Naive thymus-derived CD4-positive, alpha-beta T cell (primary cell): ENCODE measurements at regions of chr3 and their contacts with region 1.

Region 1: DNA sequence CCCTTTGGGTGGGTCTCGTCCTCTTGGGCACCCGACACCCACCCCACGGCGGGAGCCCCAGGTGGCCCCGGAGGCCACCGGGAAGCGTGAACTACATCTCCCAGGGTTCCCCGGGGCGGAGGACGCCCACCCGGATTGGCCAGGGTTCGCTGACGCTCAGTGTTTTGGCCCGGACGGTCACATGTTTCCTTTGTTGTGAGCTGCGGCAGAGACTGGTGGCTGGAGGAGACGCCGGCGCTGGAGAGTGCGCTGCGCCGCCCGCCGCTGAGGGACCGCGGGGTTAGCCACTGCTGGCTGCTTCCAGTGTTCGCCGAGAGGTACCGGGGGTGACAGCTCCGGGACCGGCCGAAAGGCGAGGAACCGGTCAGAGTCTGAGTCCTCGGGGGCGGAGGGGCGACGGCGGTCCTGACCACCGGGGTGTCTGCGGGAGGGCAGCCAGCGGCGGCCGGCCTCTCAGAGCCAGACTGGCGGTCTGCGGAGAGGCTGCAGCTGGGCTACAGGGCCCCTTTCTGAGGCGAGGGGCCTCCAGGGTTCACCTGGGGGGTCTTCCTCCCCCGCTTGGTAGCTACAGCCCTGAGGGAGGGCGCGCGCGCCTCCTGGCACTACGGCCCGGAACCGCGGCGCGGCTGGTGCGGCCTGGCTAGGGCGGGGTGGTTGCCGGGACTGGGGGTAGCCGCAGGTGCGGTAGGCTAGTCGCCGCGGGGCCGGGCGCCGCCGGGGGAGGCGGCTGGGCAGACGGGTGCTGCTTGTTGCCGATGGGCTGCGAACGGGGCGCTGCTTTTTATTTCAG is at the start of gene KLHL24:
- DNase-seq: peak; percentile 75 to 90 (median 88)
- ATAC-seq: peak; percentile 83
- H3K4me3 ChIP-seq: peak within 1 kb of the TSS; percentile 75
- H3K4me3 Mint-ChIP-seq: peak within 1 kb of the TSS; percentile 92 to 96 (median 94)
- H3K27ac ChIP-seq: peak within 1 kb of the TSS; percentile 91
- H3K27ac Mint-ChIP-seq: peak within 1 kb of the TSS; percentile 87 to 98 (median 95)
- H3K4me1 ChIP-seq: peaks cover 15 to 23% of the 10 kb centered on the region in 2 donors
- H3K4me1 Mint-ChIP-seq: peaks cover 18 to 44% (median 30%) of the 10 kb centered on the region in 7 donors
- H3K27me3 ChIP-seq: no peaks in the 10 kb centered on the region
- H3K27me3 Mint-ChIP-seq: no peaks in the 10 kb centered on the region
- total RNA-seq, gene KLHL24: 25.3 to 161 (median 129) TPM

Region 2: GRCh38 chr3:183161552-183162336 is 473.9 kb before region 1 on chr3:
- CTCF ChIA-PET with region 1: no interaction called
- POLR2A ChIA-PET with region 1: no interaction called
- intact Hi-C with region 1: loop called in 1 of 2 experiments (anchors 5 kb)
- DNase-seq: peak in 4 of 9 donors; percentile 12 to 18 (median 14)
- ATAC-seq: no peak
- H3K4me3 ChIP-seq: peak overlapping the region; percentile 92
- H3K4me3 Mint-ChIP-seq: peak overlapping the region; percentile 80 to 97 (median 90)
- H3K27ac ChIP-seq: peak overlapping the region; percentile 61
- H3K27ac Mint-ChIP-seq: peak overlapping the region; percentile 46 to 90 (median 76)
- H3K4me1 ChIP-seq: peaks cover 5% of the 10 kb centered on the region in 2 donors
- H3K4me1 Mint-ChIP-seq: peaks cover 8 to 33% (median 9%) of the 10 kb centered on the region in 7 donors
- H3K27me3 ChIP-seq: no peaks in the 10 kb centered on the region
- H3K27me3 Mint-ChIP-seq: peaks cover 0 to 3% (median 0%) of the 10 kb centered on the region in 5 donors

Region 3: GRCh38 chr3:183375787-183376186 is 259.8 kb before region 1 on chr3:
- CTCF ChIA-PET with region 1: no interaction called
- POLR2A ChIA-PET with region 1: no interaction called
- intact Hi-C with region 1: no loop called
- DNase-seq: no peak
- ATAC-seq: peak; percentile 69
- H3K4me3 ChIP-seq: no peak overlapping the region
- H3K4me3 Mint-ChIP-seq: no peak overlapping the region
- H3K27ac ChIP-seq: no peak overlapping the region
- H3K27ac Mint-ChIP-seq: no peak overlapping the region
- H3K4me1 ChIP-seq: no peaks in the 10 kb centered on the region
- H3K4me1 Mint-ChIP-seq: peaks cover 0 to 15% (median 0%) of the 10 kb centered on the region in 7 donors
- H3K27me3 ChIP-seq: no peaks in the 10 kb centered on the region
- H3K27me3 Mint-ChIP-seq: peaks cover 0 to 6% (median 0%) of the 10 kb centered on the region in 5 donors

Region 4: GRCh38 chr3:183515968-183516851 is 119.4 kb before region 1 on chr3:
- CTCF ChIA-PET with region 1: no interaction called
- POLR2A ChIA-PET with region 1: interaction called, 8 read pairs
- intact Hi-C with region 1: loop called (anchors 1 to 2 kb)
- DNase-seq: peak in 8 of 9 donors; percentile 34 to 90 (median 77)
- ATAC-seq: peak; percentile 80
- H3K4me3 ChIP-seq: peak overlapping the region; percentile 8
- H3K4me3 Mint-ChIP-seq: peak overlapping the region; percentile 39 to 84 (median 68)
- H3K27ac ChIP-seq: peak overlapping the region; percentile 57
- H3K27ac Mint-ChIP-seq: peak overlapping the region; percentile 77 to 94 (median 89)
- H3K4me1 ChIP-seq: peaks cover 32 to 54% of the 10 kb centered on the region in 2 donors
- H3K4me1 Mint-ChIP-seq: peaks cover 60 to 95% (median 90%) of the 10 kb centered on the region in 7 donors
- H3K27me3 ChIP-seq: no peaks in the 10 kb centered on the region
- H3K27me3 Mint-ChIP-seq: no peaks in the 10 kb centered on the region

Region 5: DNA sequence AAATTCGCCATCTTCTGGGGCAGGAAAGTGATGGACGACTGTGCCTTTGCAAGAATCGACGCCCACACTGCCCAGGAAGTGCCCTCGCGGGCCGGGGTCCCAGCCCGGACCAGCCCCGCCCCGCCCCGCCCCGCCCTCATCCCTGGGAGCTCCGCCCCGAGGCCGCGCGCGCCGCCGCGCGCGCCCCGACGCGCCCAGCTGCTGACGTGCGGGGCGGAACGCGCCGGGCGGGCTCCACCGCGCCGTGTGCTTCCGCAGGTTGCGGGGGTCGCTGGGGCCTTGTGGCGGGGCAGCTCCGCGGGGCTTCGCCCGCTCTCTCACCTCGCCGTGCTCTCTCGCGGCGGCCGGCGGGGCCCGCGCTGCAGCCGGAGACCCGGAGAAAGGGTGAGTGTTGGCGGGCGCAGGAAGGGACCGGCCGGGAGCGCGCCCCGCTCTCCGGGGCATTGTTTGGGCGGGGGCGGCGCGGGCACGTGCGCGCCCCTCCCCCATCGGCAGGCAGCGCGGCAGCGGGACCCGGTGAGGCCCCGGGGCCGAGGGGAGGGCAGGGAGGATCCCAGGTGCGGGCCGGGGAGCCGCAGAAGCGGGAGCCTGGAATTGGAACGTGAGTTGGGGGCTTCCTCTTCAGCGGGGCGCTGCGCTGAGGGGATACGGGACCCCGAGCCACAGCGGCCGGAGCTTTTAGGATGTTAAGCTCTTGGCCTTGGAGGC is 62.1 kb after region 1 on chr3 and contains the start of gene YEATS2:
- CTCF ChIA-PET with region 1: interaction called, 4 read pairs
- POLR2A ChIA-PET with region 1: interaction called, 41 read pairs
- intact Hi-C with region 1: loop called (anchors 1 kb)
- DNase-seq: peak; percentile 60 to 81 (median 74)
- ATAC-seq: peak; percentile 95
- H3K4me3 ChIP-seq: peak within 1 kb of the TSS; percentile 89
- H3K4me3 Mint-ChIP-seq: peak within 1 kb of the TSS; percentile 84 to 99 (median 94)
- H3K27ac ChIP-seq: peak within 1 kb of the TSS; percentile 84
- H3K27ac Mint-ChIP-seq: peak within 1 kb of the TSS; percentile 74 to 97 (median 90)
- H3K4me1 ChIP-seq: peaks cover 9 to 18% of the 10 kb centered on the region in 2 donors
- H3K4me1 Mint-ChIP-seq: peaks cover 32 to 50% (median 40%) of the 10 kb centered on the region in 7 donors
- H3K27me3 ChIP-seq: no peaks in the 10 kb centered on the region
- H3K27me3 Mint-ChIP-seq: no peaks in the 10 kb centered on the region
- total RNA-seq, gene YEATS2: 20.6 to 61.4 (median 21.9) TPM

Region 6: DNA sequence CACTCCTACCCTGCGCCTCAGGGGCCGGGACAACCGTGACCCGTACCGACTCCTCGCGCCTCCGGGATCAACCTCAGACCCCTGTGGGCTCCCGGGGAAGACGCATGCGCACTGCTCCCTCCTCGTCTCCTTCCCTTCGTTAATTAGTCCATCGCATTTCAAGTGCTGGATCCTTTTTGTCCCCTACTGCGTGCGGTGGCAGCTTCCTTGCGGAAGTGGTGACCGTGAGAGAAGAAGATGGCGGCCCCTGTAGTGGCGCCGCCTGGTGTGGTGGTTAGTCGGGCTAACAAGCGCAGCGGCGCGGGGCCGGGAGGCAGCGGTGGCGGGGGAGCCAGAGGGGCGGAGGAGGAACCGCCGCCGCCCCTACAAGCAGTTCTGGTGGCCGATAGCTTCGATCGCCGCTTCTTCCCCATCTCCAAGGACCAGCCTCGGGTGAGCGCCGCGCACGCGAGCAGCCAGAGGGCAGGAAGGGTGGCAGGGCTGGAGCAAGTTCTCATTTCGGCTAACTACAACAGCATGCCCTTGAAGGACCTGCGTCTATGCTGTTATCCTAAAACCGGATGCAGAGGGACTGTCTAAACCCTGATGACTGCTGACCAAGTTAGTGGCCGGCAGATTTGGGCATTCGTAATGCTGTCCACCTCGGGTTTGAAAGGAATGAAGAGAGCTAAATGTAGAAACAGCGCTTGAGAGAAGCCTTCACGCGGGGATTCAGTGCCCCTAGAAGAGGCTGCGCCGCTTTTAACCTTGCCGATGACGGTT is 499.7 kb after region 1 on chr3 and contains the start of gene EIF2B5:
- CTCF ChIA-PET with region 1: no interaction called
- POLR2A ChIA-PET with region 1: no interaction called
- intact Hi-C with region 1: loop called in 1 of 2 experiments (anchors 10 kb)
- DNase-seq: peak; percentile 63 to 87 (median 84)
- ATAC-seq: peak; percentile 96
- H3K4me3 ChIP-seq: peak within 1 kb of the TSS; percentile 83
- H3K4me3 Mint-ChIP-seq: peak within 1 kb of the TSS; percentile 96 to 100 (median 98)
- H3K27ac ChIP-seq: peak within 1 kb of the TSS; percentile 86
- H3K27ac Mint-ChIP-seq: peak within 1 kb of the TSS; percentile 92 to 98 (median 97)
- H3K4me1 ChIP-seq: peaks cover 4 to 10% of the 10 kb centered on the region in 2 donors
- H3K4me1 Mint-ChIP-seq: peaks cover 29 to 40% (median 38%) of the 10 kb centered on the region in 7 donors
- H3K27me3 ChIP-seq: no peaks in the 10 kb centered on the region
- H3K27me3 Mint-ChIP-seq: peaks cover 0 to 10% (median 0%) of the 10 kb centered on the region in 5 donors
- total RNA-seq, gene EIF2B5: 47.2 to 87.2 (median 67.7) TPM

Region 7: DNA sequence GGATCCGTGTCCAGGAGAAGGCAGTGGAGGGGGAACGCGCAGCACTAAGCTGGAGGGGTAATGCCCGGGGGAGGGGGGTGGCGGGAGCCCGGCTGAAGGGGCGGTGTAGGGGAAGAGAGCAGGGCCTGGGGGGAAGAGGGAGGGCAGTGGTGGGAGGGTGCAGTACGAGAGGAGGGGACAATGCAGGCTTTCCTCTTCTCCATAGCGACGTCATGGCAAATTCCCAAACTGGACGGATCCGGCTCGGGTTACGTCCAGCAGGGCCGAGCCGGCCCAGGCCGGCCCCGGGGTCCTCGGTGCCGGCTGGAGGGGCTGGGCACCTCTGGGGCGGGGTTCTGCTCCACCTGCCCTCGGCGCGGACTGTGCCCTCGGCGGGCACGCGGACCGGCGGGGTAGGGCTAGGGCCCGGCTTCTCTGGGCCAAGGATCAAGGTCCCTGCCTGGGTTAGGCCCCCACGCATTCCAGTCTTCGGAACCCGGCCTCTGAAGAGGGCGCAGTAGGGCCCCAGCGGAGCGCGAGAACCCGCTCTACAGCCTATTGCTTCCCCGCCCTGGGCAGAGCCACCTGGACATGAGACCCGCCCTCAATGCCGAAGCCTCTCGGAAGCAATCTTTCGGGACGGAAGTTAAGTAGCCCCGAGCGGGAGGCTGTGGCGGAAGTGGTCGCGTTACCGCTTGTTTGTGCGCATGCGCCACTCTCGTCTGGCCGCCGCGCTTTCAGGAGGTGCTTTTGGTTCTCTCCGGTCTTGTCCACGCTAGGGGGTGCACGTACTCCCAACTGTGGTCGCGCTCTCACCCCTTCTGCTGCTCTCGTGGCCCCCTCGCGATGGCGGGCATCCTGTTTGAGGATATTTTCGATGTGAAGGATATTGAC is 727.3 kb after region 1 on chr3:
- CTCF ChIA-PET with region 1: no interaction called
- POLR2A ChIA-PET with region 1: no interaction called
- intact Hi-C with region 1: loop called in 1 of 2 experiments (anchors 5 kb)
- DNase-seq: peak; percentile 74 to 94 (median 90)
- ATAC-seq: peak; percentile 87
- H3K4me3 ChIP-seq: peak overlapping the region; percentile 97
- H3K4me3 Mint-ChIP-seq: peak overlapping the region; percentile 95 to 100 (median 99)
- H3K27ac ChIP-seq: peak overlapping the region; percentile 84
- H3K27ac Mint-ChIP-seq: peak overlapping the region; percentile 91 to 98 (median 97)
- H3K4me1 ChIP-seq: peaks cover 11 to 13% of the 10 kb centered on the region in 2 donors
- H3K4me1 Mint-ChIP-seq: peaks cover 25 to 37% (median 30%) of the 10 kb centered on the region in 7 donors
- H3K27me3 ChIP-seq: no peaks in the 10 kb centered on the region
- H3K27me3 Mint-ChIP-seq: peaks cover 0 to 13% (median 0%) of the 10 kb centered on the region in 5 donors